GM10248 (cell line): ENCODE measurements at regions of chr6 and their contacts with region 1.

Region 1: DNA sequence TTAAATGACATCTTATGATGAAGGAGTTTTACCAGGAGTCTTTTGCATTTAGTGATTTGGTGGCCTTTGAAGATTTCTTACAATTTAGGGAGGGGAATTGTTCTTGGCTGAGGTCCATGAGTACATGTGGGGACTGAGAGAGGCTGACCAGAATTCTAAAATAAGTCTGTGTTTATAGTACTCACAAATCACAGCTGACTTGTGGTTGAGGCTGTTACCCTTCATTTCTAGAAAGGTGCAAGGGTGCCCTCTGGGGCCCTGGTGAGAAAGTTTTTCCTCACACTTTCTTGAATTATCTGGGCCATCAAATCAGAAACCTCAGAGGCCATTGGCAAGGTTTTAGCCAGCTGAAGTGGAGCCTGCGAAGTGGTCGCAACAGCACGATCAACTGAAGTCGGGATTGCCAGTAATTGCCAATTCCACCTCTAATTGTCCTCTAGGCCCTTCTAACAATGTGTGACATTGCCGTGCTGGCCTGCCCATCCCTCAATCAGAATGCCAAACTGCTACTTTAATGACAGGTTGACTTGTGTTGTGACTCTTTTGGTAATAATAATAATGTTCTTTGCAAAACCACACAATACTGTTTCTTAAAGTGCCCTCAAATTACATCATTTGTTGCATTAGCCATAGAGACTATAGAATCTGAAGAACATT is 221.6 kb downstream of the OGFRL1 start:
- DNase-seq: peak; percentile 19
- CTCF ChIP-seq: peak; percentile 47

Region 2: GRCh38 chr6:71375676-71376075 is 134.5 kb before region 1 on chr6:
- CTCF ChIA-PET with region 1: interaction called, 17 read pairs
- POLR2A ChIA-PET with region 1: no interaction called
- DNase-seq: no peak
- CTCF ChIP-seq: no peak

Region 3: GRCh38 chr6:71383901-71384489 is 126.2 kb before region 1 on chr6:
- CTCF ChIA-PET with region 1: interaction called, 29 read pairs
- POLR2A ChIA-PET with region 1: no interaction called
- DNase-seq: peak; percentile 8
- CTCF ChIP-seq: peak; percentile 46

Region 4: GRCh38 chr6:71499667-71500066 is 10.5 kb before region 1 on chr6:
- CTCF ChIA-PET with region 1: interaction called, 11 read pairs
- POLR2A ChIA-PET with region 1: no interaction called
- DNase-seq: no peak
- CTCF ChIP-seq: no peak

Region 5: GRCh38 chr6:71621918-71622519 is 111.8 kb after region 1 on chr6:
- CTCF ChIA-PET with region 1: no interaction called
- POLR2A ChIA-PET with region 1: no interaction called
- DNase-seq: no peak
- CTCF ChIP-seq: peak; percentile 17